Activated CD4-positive, alpha-beta memory T cell treated with anti-CD3 and anti-CD28 coated beads, Interleukin-2, amount 10 ng/mL, durations not matched to agents 7 days and 5 days (primary cell): ENCODE measurements at regions of chr1 and their contacts with region 1.

Region 1: DNA sequence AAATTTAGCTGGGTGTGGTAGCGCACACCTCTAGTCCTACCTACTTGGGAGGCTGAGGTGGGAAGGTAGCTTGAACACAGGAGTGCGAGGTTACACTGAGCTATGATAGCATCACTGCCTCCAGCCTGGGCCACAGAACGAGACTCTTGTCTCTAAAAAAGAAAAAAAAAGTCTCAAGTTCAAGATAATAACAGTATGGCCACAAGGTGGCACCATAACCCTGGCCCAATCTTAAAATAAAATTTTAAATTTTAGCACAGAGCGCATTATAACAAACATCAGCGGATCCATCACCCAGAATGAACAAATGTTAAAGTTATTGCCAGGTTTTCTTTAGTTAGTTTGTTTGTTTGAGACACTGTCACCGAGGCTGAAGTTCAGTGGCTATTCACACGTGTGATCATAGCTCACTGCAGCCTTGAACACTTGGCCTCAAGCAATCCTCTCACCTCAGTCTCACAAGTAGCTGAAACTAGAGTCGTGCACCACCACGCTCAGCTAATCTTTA is 2.9 kb upstream of the HTR6 start:
- DNase-seq: no peak
- H3K4me3 Mint-ChIP-seq: no peak overlapping the region
- H3K27ac Mint-ChIP-seq: no peak overlapping the region
- H3K4me1 Mint-ChIP-seq: peaks cover 22% of the 10 kb centered on the region
- H3K27me3 Mint-ChIP-seq: peaks cover 33% of the 10 kb centered on the region

Region 2: DNA sequence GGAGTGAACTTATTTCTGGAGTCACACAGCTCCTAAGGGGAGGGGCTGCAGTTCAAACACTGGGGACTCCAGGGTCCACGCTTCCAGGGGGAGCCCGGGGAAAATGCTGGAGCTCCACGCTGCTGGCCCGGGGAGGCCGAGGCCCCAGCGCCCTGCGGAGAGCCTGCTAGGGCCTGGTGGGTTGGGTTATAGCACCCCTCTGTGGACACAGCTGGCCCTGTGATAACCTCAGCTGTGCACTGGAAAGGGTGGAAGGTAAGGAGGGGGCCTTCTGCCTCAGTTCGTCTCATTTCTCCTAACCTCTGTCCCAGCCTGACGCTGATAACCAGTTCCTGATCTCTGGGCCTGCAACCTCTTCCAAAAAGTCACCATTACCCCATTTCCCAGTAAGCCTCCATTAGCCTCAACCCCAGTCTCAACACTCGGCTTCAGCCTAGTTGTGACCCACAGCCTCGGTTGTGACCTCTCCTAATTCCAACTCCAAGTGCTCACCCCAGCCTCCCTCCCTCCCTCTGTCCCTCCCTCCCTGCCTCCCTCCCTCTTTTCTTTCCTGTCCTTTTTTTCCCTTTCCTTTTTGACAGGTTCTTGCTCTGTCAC is 10.5 kb before region 1 on chr1:
- CTCF ChIA-PET with region 1: interaction called, 19 read pairs
- POLR2A ChIA-PET with region 1: no interaction called
- DNase-seq: peak; percentile 60
- H3K4me3 Mint-ChIP-seq: no peak overlapping the region
- H3K27ac Mint-ChIP-seq: no peak overlapping the region
- H3K4me1 Mint-ChIP-seq: peaks cover 32% of the 10 kb centered on the region
- H3K27me3 Mint-ChIP-seq: no peaks in the 10 kb centered on the region

Region 3: GRCh38 chr1:19676438-19676922 is 14.7 kb after region 1 on chr1:
- CTCF ChIA-PET with region 1: interaction called, 13 read pairs
- POLR2A ChIA-PET with region 1: no interaction called
- DNase-seq: peak; percentile 29
- H3K4me3 Mint-ChIP-seq: no peak overlapping the region
- H3K27ac Mint-ChIP-seq: no peak overlapping the region
- H3K4me1 Mint-ChIP-seq: no peaks in the 10 kb centered on the region
- H3K27me3 Mint-ChIP-seq: peaks cover 5% of the 10 kb centered on the region

Region 4: DNA sequence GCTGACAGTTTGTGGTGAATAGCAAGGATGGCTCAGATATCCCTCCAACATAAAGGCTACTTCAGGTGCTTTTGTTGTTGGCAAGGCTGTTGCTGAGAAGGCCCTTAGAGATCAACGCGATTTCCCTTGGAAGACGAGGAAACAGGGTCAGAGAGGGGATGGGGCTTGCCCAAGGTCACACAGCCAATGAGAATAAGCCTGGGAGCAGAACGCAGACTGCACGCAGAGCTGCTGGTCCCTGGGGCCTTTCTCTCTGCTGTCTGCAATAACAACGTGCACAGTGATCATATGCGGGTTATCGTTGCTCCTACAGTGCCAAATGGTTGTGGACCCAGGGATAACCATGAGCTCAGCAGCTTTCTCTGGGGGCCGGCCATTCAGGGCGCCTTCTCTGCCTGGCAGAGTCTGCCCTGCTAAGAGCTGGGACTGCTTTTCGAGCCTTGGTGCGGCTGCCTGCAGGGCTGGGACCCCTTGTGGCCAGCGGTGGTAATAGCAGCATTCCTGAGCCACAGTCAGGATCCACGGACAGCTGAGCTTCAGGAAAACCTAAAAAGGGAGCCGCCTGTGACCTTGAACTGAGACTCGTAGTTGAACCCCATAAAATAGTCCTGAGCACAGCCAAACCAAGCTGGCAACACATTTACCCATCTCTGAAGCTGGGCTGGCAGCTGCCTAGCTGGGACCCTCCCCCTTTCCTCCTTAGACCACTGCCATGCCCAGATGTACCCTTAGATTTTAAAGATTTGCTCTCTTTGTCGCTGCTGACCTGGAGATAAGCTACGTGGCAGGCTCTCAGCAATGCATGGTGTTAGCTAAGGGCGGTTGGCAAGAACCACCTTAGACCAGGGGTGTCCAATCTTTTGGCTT is 42.7 kb after region 1 on chr1:
- CTCF ChIA-PET with region 1: interaction called, 77 read pairs
- POLR2A ChIA-PET with region 1: interaction called, 5 read pairs
- DNase-seq: peak; percentile 50
- H3K4me3 Mint-ChIP-seq: no peak overlapping the region
- H3K27ac Mint-ChIP-seq: no peak overlapping the region
- H3K4me1 Mint-ChIP-seq: peaks cover 4% of the 10 kb centered on the region
- H3K27me3 Mint-ChIP-seq: no peaks in the 10 kb centered on the region

Region 5: DNA sequence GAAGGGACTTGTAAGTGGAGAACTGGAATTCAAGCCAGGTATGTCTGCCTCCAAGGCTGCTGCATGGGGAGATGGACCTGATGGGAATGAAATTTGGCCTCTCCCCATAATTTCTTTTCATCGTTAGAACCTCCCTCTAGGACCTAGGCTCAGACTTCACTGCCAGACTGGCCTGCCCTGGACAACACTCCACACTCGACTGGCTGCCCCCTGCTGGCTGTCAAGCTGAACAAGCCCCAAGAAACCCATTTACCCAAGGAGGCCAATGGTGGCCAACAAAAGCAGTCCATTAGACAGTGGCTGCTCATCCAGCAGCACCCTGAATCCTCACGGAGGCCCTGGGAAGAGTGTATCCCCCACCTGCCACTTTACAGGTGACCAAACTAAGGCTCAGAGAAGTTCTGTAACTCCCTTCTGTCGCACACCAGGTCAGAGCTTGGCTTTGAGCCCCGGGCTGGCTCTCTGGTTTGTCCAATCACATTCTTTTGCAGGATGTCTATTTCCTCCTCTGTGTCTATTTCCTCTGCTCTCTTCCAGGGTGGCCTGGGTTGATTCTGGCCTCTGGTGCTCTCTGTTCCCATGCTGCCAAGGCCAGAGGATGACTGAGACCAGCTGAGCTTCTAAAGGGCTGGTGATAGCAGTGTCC is 149.6 kb after region 1 on chr1:
- CTCF ChIA-PET with region 1: interaction called, 14 read pairs
- POLR2A ChIA-PET with region 1: no interaction called
- DNase-seq: peak; percentile 59
- H3K4me3 Mint-ChIP-seq: no peak overlapping the region
- H3K27ac Mint-ChIP-seq: no peak overlapping the region
- H3K4me1 Mint-ChIP-seq: no peaks in the 10 kb centered on the region
- H3K27me3 Mint-ChIP-seq: peaks cover 3% of the 10 kb centered on the region